HAP-1 (cell line): ENCODE measurements at regions of chr2 and their contacts with region 1.

Region 1: GRCh38 chr2:179751163-179751809 is 110.1 kb downstream of the ZNF385B start:
- DNase-seq: peak in 1 of 2 experiments; percentile 57
- H3K4me3 ChIP-seq: no peak overlapping the region
- H3K4me1 ChIP-seq: no peaks in the 10 kb centered on the region
- H3K27me3 ChIP-seq: no peaks in the 10 kb centered on the region

Region 2: GRCh38 chr2:178761759-178762371 is 989.4 kb before region 1 on chr2:
- in situ Hi-C with region 1: loop called (anchors 25 kb)
- DNase-seq: peak; percentile 55 to 57
- H3K4me3 ChIP-seq: no peak overlapping the region
- H3K4me1 ChIP-seq: no peaks in the 10 kb centered on the region
- H3K27me3 ChIP-seq: 0 out of 2 replicates have a peak, but pooled peaks cover 3% of the 10 kb centered on the region

Region 3: DNA sequence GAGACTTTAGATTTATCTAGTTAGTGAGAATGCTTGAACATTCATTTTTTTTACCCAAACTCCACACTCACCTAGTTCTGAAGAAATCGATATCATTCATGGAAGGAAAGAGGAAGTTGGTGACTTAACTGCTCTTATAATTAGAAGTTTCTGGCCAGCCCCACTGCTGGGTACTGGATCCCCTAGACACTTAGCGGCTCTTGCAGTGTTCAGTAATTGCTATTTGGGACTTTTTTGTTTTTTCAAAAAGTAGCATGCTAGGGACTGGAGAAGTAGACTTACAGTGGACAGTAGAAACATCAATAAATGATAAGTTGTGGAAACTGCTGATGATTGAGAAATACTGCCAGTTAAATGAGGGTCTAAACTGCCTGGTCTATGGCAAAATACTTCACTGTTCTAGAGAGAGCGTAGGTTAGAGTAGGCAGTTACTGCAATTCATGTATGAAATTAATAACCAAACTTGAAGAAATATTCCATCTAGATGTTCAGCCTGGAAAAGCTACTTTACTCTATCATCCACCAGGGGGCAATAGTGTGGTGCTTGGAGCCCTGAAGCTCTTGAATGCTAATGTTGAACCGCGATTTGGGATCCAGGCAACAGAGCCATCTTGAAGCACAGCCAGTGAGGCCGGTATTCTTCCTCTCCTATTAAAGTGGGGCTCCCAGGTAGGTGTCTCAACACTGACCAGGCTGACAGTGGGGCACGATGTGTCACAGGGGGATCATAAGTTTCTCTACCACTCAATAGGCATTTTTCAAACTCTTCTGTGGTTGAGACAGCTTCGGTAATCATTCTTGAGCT is 340.5 kb before region 1 on chr2:
- in situ Hi-C with region 1: loop called (anchors 5 kb)
- DNase-seq: peak; percentile 63 to 75
- H3K4me3 ChIP-seq: no peak overlapping the region
- H3K4me1 ChIP-seq: no peaks in the 10 kb centered on the region
- H3K27me3 ChIP-seq: no peaks in the 10 kb centered on the region